ENCODE measurements at regions of chr1 and their contacts with region 1.

Region 1: DNA sequence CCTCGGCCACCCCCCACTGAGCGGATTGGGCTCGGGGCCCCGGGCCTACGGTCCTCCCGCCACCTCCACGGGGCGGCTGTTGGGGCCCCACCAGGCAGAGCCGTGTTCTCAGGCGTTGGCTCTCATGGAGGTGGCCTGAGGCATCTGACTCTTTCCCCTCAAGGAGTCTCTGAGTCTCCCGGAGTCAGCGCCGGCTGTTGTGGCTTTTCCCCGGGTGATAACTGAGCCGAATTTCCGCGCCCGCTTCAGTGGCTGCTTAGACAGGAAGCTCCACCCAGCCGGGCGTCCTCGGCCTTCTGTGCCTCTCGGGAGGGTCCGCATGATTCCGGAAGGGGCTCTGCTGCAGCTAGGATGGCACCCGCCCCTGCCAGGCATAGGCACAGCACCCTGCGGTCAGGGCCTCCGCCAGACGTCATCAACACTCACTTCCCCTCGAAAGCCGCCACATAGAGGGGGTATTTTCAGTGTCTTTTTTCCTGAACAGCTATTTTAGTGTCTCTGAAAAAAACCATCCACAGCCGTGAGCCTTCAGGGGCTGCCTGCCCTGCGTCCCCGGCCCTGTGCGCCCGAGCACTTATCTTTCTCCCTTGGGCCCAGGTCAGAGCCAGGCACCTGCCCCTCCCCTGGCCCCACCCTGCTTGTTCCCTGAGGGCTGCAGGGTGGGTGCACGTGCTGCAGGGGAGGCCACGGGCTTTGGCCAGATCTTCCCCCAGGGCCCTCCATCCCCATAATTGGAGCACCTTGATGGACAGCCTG is 72.9 kb downstream of the SKI start:
- DNase-seq: peak; percentile 95
- H3K4me3 Mint-ChIP-seq: peak overlapping the region; percentile 71
- H3K27ac Mint-ChIP-seq: peak overlapping the region; percentile 97
- H3K4me1 Mint-ChIP-seq: peaks cover 68% of the 10 kb centered on the region
- H3K27me3 Mint-ChIP-seq: no peaks in the 10 kb centered on the region

Region 2: DNA sequence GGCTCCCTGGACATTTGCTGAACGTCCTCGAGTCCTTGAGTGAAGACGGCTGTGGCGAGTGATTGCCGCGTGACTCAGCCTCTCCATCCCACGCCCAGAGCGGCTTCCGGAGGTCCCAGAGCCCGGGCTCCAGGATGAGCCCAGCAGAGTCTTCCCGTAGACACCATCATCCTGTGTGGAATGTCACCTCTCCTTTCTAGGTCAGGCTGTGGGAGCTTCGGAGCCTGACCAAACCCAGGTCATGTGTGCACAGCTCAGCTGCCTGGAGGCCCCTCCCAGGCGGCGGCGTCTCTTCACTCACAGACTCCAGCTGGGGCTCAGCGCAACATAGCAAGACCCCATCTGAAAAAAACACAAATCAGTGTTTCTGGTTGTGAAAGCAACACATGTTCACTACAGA is 212.6 kb before region 1 on chr1:
- CTCF ChIA-PET with region 1: no interaction called
- POLR2A ChIA-PET with region 1: no interaction called
- DNase-seq: no peak
- H3K4me3 Mint-ChIP-seq: no peak overlapping the region
- H3K27ac Mint-ChIP-seq: no peak overlapping the region
- H3K4me1 Mint-ChIP-seq: no peaks in the 10 kb centered on the region
- H3K27me3 Mint-ChIP-seq: peaks cover 3% of the 10 kb centered on the region

Region 3: GRCh38 chr1:2290595-2291510 is 10.2 kb before region 1 on chr1:
- CTCF ChIA-PET with region 1: interaction called, 7 read pairs
- POLR2A ChIA-PET with region 1: interaction called, 93 read pairs
- DNase-seq: peak; percentile 92
- H3K4me3 Mint-ChIP-seq: peak overlapping the region; percentile 74
- H3K27ac Mint-ChIP-seq: peak overlapping the region; percentile 97
- H3K4me1 Mint-ChIP-seq: peaks cover 85% of the 10 kb centered on the region
- H3K27me3 Mint-ChIP-seq: no peaks in the 10 kb centered on the region